Thyroid gland (tissue), 4 donors: ENCODE measurements at regions of chr1 and their contacts with region 1.

Region 1: GRCh38 chr1:40849801-40850592 is 12.2 kb downstream of the CITED4 start:
- DNase-seq: peak; percentile 70 to 75
- H3K4me3 ChIP-seq: no peak overlapping the region
- H3K27ac ChIP-seq: no peak overlapping the region
- H3K4me1 ChIP-seq: no peaks in the 10 kb centered on the region
- H3K27me3 ChIP-seq: no peaks in the 10 kb centered on the region
- CTCF ChIP-seq: peak; percentile 43 to 93 (median 75)
- POLR2A ChIP-seq: no peak

Region 2: GRCh38 chr1:40592107-40592803 is 257.7 kb before region 1 on chr1:
- intact Hi-C with region 1: no loop called
- DNase-seq: peak; percentile 16 to 39
- H3K4me3 ChIP-seq: no peak overlapping the region
- H3K27ac ChIP-seq: no peak overlapping the region
- H3K4me1 ChIP-seq: no peaks in the 10 kb centered on the region
- H3K27me3 ChIP-seq: no peaks in the 10 kb centered on the region
- CTCF ChIP-seq: peak in 4 of 6 experiments; percentile 49 to 78 (median 56)
- POLR2A ChIP-seq: no peak

Region 3: DNA sequence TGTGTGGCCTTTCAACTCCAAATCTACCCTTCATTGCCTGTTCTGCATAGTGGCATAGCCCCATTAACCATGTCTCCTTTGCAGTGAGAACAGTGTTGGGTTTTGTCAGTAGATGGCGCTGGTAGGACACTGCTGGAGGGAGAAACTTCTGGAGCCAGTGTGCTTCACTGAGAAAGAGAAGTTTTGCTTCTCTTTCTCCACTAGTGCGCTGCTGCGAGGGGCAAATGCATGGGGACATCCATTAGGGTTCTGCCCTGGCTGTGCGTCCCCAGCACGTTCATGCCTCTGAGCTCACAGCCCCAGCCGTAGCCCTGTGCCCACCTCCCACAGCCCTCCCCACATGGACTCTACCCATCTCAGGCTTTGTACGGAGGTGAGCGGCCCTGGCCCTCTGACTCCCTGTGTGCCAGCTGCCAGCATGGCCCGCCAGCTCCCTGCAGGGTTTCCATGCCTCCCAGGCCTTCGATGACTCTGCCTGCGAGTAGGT is 237.6 kb before region 1 on chr1:
- intact Hi-C with region 1: loop called (anchors 5 kb)
- DNase-seq: peak; percentile 53 to 64
- H3K4me3 ChIP-seq: no peak overlapping the region
- H3K27ac ChIP-seq: no peak overlapping the region
- H3K4me1 ChIP-seq: peaks cover 0 to 12% of the 10 kb centered on the region in 2 donors
- H3K27me3 ChIP-seq: no peaks in the 10 kb centered on the region
- CTCF ChIP-seq: peak in 5 of 6 experiments; percentile 44 to 77 (median 64)
- POLR2A ChIP-seq: no peak

Region 4: GRCh38 chr1:40774266-40774998 is 75.6 kb before region 1 on chr1:
- intact Hi-C with region 1: loop called (anchors 10 kb)
- DNase-seq: peak; percentile 60 to 61
- H3K4me3 ChIP-seq: no peak overlapping the region
- H3K27ac ChIP-seq: no peak overlapping the region
- H3K4me1 ChIP-seq: no peaks in the 10 kb centered on the region
- H3K27me3 ChIP-seq: no peaks in the 10 kb centered on the region
- CTCF ChIP-seq: peak; percentile 44 to 76 (median 60)
- POLR2A ChIP-seq: no peak

Region 5: DNA sequence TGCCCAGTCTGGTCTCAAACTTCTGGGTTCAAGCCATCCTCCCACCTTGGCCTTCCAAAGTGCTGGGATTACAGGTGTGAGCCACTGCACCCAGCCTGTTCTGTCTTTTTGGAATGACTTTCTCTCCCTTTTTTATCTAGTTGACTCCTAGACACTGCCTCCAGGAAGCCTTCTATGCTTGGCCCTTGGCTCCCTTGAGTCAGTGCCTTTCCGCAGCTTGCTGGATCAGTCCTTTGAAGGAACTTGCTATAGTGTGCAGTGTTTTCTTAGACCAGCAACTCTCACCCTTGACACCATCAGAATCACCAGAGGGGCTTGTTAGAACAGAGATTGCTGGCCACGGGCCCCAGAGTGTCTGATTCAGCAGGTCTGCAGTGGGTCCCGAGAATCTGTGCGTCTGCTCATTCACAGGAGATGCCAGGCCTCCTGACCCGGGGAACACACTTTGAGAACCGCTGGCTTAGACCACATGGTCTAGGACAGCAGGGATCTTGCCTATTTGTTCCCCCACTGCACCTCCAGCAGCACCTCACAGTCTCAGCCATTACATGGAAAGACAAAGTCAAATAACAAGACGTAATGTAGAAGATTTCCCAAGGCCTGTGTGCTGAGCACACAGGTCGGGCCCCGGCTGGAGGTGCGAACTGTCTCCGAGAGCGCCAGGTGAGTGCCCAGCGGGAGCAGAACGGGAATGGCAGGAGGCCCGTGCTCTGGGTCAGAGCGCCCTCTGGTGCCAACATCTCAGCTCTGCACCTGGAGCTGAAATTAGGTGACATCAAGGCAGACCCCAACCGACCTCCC is 102.1 kb after region 1 on chr1:
- intact Hi-C with region 1: loop called (anchors 2 kb)
- DNase-seq: peak; percentile 79 to 84
- H3K4me3 ChIP-seq: no peak overlapping the region
- H3K27ac ChIP-seq: no peak overlapping the region
- H3K4me1 ChIP-seq: no peaks in the 10 kb centered on the region
- H3K27me3 ChIP-seq: no peaks in the 10 kb centered on the region
- CTCF ChIP-seq: peak; percentile 78 to 97 (median 92)
- POLR2A ChIP-seq: no peak